Vagina (tissue), 2 donors: ENCODE measurements at regions of chr6 and their contacts with region 1.

Region 1: DNA sequence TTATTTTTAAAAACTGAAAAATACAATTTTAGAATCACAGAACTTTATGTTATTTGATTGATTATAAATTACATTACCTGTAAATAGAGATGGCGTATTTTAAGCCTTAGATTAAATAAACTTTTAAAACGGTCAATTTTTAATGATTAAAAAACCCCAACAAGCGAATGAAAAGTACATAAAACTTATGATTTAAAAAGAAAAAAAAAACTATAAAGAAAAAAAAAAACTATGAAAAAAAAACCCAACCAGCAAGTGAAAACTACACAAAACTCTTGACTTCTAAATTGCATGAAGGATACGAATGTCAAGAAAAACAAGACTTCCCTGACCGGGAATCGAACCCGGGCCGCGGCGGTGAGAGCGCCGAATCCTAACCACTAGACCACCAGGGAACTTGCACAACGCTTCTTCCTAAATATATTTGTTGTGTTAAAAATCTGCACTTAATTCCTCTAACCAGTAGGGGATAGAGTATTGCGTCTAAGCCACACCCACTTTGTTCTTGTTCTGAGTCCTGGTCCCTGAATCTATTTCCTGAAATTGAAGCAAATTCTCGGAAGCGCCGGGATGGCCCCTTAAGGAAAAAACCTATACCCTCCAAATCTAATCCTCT is 10.7 kb upstream of the NCOA7 start:
- DNase-seq: peak in 1 of 2 donors; percentile 96
- H3K4me3 ChIP-seq: peak overlapping the region; percentile 59 to 70
- H3K27ac ChIP-seq: peak overlapping the region; percentile 86
- H3K4me1 ChIP-seq: peaks cover 8% of the 10 kb centered on the region
- H3K27me3 ChIP-seq: no peaks in the 10 kb centered on the region
- CTCF ChIP-seq: peak in 1 of 3 experiments; percentile 34
- POLR2A ChIP-seq: no peak

Region 2: DNA sequence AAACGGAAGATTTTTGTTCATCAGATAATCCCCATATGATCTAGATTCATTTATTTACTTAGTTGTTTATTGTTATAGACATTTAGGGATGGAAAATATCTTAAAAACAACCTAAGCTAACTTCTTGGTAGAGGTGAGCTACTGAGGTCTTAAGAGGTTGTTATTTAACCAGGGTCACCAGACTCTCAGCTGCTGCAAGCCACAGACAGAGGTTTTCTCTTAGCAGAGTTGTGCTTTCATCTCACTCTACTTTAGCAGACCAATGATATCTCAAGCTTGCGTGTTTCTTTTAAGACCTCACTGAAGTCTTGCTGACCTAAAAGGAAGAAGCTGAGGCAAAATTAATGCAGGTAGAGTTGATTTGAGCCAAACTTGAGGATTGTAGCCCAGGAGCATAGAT is 54.3 kb after region 1 on chr6:
- intact Hi-C with region 1: no loop called
- DNase-seq: no peak
- H3K4me3 ChIP-seq: no peak overlapping the region
- H3K27ac ChIP-seq: peak overlapping the region; percentile 49
- H3K4me1 ChIP-seq: peaks cover 26% of the 10 kb centered on the region
- H3K27me3 ChIP-seq: no peaks in the 10 kb centered on the region
- CTCF ChIP-seq: no peak
- POLR2A ChIP-seq: no peak

Region 3: GRCh38 chr6:125956506-125957390 is 176.7 kb after region 1 on chr6 and contains the start of gene HINT3:
- intact Hi-C with region 1: loop called (anchors 5 kb)
- DNase-seq: peak in 1 of 2 donors; percentile 96
- H3K4me3 ChIP-seq: peak within 1 kb of the TSS; percentile 78 to 88
- H3K27ac ChIP-seq: peak within 1 kb of the TSS; percentile 96
- H3K4me1 ChIP-seq: peaks cover 37% of the 10 kb centered on the region
- H3K27me3 ChIP-seq: no peaks in the 10 kb centered on the region
- CTCF ChIP-seq: peak; percentile 95 to 99 (median 97)
- POLR2A ChIP-seq: peak in 1 of 2 donors; percentile 15
- total RNA-seq, gene HINT3: 18.4 TPM

Region 4: GRCh38 chr6:126112144-126112632 is 332.2 kb after region 1 on chr6:
- intact Hi-C with region 1: no loop called
- DNase-seq: no peak
- H3K4me3 ChIP-seq: no peak overlapping the region
- H3K27ac ChIP-seq: no peak overlapping the region
- H3K4me1 ChIP-seq: peaks cover 5% of the 10 kb centered on the region
- H3K27me3 ChIP-seq: no peaks in the 10 kb centered on the region
- CTCF ChIP-seq: no peak
- POLR2A ChIP-seq: no peak